ENCODE measurements at regions of chr20 and their contacts with region 1.

Region 1: DNA sequence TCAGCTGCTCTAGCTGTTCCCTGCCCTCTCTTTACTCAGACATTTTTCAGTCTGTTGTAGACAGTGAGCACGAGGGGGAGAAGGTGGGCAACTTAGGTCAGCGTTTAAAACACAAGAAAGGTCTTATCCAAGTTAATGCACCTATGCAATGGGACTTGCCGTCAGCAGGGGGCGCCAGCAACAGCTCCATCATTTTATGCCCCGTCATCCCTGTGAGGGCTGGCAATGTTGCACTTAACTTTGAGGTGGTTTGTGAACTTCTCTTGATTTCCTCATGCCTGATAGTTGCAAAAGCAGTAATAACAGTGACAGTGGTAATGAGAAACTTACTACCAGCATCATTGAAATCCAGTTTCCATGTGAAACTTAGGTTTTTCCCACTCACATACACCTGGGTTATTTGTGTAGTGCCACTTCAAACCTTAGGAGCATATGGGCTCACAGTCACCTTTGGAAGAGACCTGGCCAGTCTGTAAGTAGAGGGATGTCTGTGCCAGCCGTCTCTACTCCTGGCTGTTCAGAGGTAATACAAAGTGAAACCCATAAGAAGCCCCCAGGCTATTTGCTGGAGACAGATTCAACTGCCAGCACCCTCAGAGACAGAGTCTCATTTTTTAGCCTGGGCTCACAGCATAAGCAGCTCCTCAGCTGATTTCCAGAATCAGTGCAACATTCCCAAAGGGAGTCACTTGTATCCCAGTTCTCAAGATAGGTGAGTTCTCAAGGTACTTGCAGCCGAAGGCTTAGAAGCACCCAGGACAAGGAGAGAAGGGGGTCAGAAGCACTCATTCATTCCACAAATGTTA is 44.8 kb upstream of the ID1 start:
- DNase-seq: peak; percentile 76
- H3K4me3 ChIP-seq: no peak overlapping the region
- H3K27ac ChIP-seq: peak overlapping the region; percentile 93
- H3K4me1 ChIP-seq: peaks cover 51% of the 10 kb centered on the region
- H3K27me3 ChIP-seq: no peaks in the 10 kb centered on the region
- CTCF ChIP-seq: peak; percentile 92 to 99

Region 2: DNA sequence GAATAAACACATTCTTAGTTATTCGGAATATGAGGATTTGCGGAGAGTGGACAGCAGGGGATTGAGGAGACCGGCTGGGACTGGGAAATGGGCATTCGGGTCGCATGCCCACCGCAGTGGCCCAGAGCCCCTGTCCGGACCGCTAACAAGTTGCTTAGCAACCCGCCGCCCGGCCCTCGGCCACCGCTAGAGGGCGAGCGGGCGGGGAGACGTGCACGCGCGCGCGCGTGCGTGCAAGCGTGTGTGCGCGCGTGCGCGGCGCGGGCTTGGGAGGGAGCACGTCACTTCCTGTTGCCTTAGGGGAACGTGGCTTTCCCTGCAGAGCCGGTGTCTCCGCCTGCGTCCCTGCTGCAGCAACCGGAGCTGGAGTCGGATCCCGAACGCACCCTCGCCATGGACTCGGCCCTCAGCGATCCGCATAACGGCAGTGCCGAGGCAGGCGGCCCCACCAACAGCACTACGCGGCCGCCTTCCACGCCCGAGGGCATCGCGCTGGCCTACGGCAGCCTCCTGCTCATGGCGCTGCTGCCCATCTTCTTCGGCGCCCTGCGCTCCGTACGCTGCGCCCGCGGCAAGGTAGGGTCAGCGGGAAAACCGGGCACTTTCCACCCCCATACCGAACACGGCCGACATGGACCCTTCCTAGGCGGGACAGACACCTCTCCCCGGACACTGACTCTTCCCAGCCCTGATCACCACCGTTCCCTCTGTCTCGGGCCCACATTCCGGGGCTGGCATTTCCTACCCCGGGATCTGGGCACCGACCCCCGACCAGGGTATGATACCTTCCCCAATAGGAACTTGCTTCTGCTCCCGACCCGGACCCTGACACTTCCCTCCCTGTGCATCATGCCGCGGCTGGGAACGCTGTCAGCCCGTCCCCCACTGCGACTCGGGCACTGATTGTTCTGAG is 45.9 kb before region 1 on chr20 and contains the start of gene HM13:
- CTCF ChIA-PET with region 1: interaction called, 3 read pairs
- dilution Hi-C with region 1: no loop called
- in situ Hi-C with region 1: no loop called
- intact Hi-C with region 1: loop called (anchors 5 kb)
- DNase-seq: peak; percentile 88
- H3K4me3 ChIP-seq: peak within 1 kb of the TSS; percentile 84 to 100 (median 99)
- H3K27ac ChIP-seq: peak within 1 kb of the TSS; percentile 77
- H3K4me1 ChIP-seq: peaks cover 17% of the 10 kb centered on the region
- H3K27me3 ChIP-seq: no peaks in the 10 kb centered on the region
- CTCF ChIP-seq: peak; percentile 86 to 91
- total RNA-seq, gene HM13: 65.2 to 184 TPM

Region 3: DNA sequence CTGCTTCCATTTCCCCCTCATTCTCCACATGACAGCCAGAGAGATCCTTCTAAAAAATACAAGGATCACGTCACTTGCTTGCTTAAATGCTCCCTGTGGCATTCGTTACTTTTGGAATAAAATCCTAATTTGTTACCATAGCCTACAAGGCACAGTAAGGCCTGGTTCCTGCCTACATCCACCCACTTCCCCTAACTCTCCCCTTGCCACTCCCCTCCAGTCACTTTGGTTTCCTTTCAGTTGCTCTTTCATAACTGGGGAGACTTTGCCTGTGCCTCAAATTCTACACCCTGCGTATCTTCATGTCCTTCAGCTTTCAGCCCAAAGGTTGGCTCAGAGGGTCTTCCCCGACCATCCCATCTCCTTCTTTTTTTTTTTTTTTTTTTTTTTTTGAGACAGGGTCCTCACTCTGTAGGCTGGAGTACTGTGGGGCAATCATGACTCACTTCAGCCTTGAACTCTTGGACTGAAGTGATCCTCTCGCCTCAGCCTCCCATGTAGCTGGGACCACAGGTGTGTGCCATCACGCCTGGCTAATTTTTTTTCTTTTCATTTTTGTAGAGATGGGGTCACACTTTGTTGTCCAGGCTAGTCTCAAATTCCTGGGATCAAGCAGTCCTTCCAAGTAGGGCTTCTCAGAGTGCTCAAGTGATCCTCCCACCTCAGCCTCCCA is 57.3 kb after region 1 on chr20:
- CTCF ChIA-PET with region 1: interaction called, 45 read pairs
- dilution Hi-C with region 1: loop called (anchors 5 kb)
- in situ Hi-C with region 1: no loop called
- intact Hi-C with region 1: loop called (anchors 1 kb)
- DNase-seq: no peak
- H3K4me3 ChIP-seq: no peak overlapping the region
- H3K27ac ChIP-seq: no peak overlapping the region
- H3K4me1 ChIP-seq: peaks cover 2% of the 10 kb centered on the region
- H3K27me3 ChIP-seq: no peaks in the 10 kb centered on the region
- CTCF ChIP-seq: no peak

Region 4: GRCh38 chr20:31738729-31739561 is 178.6 kb after region 1 on chr20 and contains the start of gene TPX2:
- CTCF ChIA-PET with region 1: no interaction called
- dilution Hi-C with region 1: no loop called
- in situ Hi-C with region 1: no loop called
- intact Hi-C with region 1: loop called (anchors 5 kb)
- DNase-seq: peak; percentile 96
- H3K4me3 ChIP-seq: peak within 1 kb of the TSS; percentile 77 to 96 (median 85)
- H3K27ac ChIP-seq: peak within 1 kb of the TSS; percentile 92
- H3K4me1 ChIP-seq: peaks cover 4% of the 10 kb centered on the region
- H3K27me3 ChIP-seq: no peaks in the 10 kb centered on the region
- CTCF ChIP-seq: peak in 1 of 2 donors; percentile 33
- total RNA-seq, gene TPX2: 9.5 to 74.3 TPM